Activated T-helper 2 cell treated with anti-CD3 and anti-CD28 coated beads, Interferon-gamma antibody, Interleukin-2, Interleukin-4, amounts not matched to agents 10 μg/mL and 5 μg/mL and 100 μg/mL, durations not matched to agents 14 hours and 24 hours and 36 hours (primary cell): ENCODE measurements at regions of chr5 and their contacts with region 1.

Region 1: DNA sequence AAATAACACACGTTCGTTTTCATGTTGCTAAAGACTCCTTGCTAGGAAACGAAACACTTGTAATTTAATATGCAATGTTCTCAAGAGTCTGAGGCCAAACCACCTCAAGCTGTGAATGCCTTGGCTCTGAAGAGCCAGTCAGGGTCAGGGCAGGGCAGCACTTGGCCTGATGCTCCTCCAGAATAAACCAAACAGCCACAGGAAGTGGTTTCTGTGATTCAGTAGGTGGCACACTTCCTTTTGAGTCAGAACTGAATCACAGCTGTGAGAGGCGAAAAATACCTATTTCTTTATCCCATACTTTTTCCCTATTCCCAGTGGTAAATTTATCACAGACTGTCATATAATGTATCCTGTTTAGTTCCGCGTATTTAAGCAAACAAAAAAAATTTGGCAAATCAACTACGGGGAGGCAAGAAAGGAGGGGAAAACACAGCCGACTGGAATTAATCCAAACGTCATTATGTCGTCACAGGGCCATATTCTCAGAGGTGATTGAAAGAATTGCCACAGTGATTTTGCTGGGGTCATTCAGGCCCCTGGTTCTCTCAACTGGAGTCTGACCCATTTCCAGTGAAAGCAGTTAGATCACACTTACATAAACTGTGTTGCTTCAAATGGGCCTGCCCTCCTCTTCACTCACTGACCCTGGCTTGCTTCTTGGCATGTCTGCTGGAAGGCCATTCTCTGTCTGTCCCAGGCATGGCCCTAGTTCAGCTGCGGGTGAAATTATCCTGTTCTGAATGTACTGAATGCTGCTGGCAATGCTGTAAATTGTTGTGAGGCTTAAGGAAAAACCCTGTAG is 71.2 kb downstream of the ARRDC3 start:
- DNase-seq: peak; percentile 59
- H3K4me3 Mint-ChIP-seq: no peak overlapping the region
- H3K27ac Mint-ChIP-seq: peak overlapping the region; percentile 69
- H3K4me1 Mint-ChIP-seq: peaks cover 44% of the 10 kb centered on the region
- H3K27me3 Mint-ChIP-seq: no peaks in the 10 kb centered on the region

Region 2: DNA sequence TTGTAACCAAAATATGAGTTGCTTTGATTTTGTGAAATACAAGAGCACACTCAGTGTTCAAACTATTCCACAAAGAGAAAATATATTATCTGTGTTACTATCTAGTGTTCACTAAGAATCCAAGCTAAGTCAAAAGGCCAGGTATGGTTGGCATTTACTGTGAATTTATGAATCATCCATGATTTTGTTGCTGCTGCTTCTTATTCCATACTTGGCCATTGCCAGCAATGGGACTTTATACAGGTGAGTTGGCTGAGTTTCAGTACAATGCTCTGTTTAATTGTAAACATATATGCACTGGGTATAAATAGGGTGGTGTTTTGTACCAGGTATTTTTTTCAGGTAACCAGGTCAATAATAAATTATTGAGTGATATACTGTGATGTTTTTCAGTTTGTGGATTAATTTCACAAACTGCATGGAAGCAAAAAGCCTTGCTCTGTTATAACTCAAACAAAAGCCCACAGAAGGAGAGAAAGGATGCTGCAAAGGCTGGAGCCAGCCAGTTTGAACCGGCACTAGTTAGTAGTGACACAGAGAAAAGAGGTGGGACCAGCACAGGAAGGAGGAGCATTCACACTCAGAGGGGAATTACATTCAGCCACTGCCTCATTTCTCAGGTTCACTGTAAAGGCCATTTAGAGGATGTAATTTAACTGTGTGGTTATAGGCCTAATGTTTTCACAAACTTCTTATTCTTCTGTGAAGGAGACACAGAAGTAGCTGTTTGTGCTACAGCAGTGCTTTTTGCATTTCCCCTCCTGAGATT is 371.5 kb before region 1 on chr5:
- intact Hi-C with region 1: loop called (anchors 5 kb)
- DNase-seq: peak; percentile 39
- H3K4me3 Mint-ChIP-seq: no peak overlapping the region
- H3K27ac Mint-ChIP-seq: peak overlapping the region; percentile 82
- H3K4me1 Mint-ChIP-seq: peaks cover 36% of the 10 kb centered on the region
- H3K27me3 Mint-ChIP-seq: no peaks in the 10 kb centered on the region

Region 3: DNA sequence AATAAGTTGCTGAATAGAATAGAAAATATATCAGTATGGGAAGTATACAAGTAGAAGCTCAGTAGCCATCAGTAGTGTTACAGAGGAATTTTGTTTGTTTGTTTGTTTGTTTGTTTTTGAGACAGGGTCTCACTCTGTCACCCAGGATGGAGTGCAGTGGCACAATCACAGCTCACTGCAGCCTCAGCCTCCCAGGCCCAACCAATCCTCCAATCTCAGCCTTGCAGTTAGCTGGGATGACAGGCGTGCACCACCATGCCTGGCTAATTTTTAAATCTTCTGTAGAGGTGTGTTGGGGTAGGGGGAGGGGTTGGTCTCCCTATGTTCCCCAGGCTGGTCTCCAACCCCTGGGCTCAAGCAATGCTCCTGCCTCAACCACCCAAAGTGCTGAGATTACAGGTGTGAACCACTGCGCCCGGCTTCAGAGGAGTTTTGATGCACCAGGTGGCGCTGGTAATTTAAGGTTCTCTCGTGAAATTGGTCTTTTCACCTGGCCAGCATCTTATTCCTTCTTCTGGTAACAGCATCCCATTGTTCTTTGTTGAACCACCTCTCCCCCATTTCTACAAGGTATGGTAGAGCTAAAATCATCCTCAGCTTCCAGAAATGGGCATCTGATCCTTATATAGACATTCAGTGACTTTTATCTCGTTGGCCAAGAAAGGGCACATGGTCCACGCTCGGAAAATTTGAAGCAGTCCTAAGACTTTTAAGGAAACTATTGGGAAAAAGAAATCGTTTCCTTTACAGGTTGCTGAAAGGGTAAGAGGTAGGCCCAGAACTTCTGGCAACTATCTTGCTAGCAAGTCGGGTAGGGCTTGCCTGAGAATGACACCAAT is 85.8 kb before region 1 on chr5:
- intact Hi-C with region 1: loop called (anchors 5 kb)
- DNase-seq: peak; percentile 26
- H3K4me3 Mint-ChIP-seq: no peak overlapping the region
- H3K27ac Mint-ChIP-seq: no peak overlapping the region
- H3K4me1 Mint-ChIP-seq: peaks cover 4% of the 10 kb centered on the region
- H3K27me3 Mint-ChIP-seq: peaks cover 18% of the 10 kb centered on the region

Region 4: DNA sequence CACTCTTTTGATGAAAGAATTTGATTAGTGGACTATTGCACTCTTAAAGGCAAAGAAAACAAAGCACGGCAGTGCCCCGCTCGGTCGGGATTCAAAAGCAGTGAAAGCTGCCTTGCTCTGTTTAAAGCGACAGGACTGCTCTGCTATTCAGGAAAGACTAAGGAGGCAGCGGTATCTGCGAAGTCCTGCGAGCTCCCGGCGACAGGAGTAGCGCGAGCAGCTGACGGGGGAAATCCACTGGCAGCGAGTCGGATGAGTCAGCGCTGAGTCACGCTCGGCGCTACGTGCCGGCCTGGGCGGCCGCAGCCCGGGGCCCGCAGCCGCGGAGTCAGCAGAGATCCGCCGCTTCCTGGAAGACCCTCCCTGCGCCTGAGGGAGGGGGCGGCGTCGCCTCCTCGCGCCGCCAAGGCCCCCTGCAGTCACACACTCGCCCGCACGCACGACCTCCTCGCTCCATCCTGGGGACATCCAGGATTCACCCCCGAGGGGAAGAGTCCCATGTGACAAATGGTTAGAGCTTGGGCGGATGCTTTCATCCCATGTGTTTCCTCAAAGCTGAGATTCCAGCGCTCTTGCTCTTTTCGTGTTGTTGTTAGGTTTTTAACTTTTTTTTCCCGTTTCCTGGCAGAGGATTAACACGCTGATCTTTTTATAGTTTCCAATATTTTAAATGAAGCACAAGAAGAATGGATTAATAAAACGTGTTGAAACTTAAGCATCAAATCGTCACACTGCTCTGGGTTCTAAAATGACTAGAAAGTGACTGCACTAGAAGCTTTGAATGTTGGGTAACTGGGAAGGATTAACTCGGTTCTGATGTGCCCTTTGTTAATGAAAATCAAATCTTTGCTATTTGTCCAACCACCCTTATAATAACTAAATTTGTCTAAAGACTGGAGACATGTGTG is 31.3 kb before region 1 on chr5:
- intact Hi-C with region 1: loop called (anchors 1 kb)
- DNase-seq: peak; percentile 79
- H3K4me3 Mint-ChIP-seq: peak overlapping the region; percentile 81
- H3K27ac Mint-ChIP-seq: peak overlapping the region; percentile 96
- H3K4me1 Mint-ChIP-seq: peaks cover 36% of the 10 kb centered on the region
- H3K27me3 Mint-ChIP-seq: peaks cover 10% of the 10 kb centered on the region

Region 5: DNA sequence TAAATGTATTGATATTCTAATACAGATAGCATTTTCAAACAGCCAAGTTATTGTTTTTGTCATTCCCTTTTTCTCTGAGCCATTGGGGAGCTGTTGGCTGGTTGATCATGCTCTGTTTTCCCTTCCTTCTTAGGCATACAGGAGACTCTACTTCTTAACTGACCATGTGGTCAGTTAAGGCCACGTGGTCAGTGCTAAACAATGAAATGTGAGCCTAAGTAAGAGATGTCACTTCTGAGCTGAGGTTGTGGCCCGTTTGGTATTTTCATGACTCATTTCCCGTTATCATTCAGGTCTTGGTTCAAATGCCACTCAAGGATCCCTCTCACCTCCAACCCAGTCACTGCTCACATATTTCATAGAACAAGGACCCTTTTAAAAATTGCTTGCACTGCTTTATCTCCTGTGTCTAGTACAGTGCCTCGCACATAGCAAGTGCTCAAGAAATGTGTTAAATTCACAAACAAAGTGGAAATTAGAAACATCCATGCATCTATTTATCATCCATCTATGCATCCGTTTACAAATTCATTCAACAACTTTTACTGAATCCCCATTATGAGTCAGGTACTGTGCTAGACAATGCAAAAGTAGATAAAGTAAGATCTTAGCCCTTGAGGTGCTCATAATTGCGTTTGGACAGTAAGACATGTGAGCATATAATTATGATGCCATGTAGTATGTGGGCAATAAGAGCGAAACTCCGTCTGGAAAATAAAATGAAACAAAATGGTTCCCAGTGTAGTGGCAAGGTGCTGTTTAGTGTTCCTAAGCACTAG is 20.6 kb after region 1 on chr5:
- intact Hi-C with region 1: loop called (anchors 1 kb)
- DNase-seq: no peak
- H3K4me3 Mint-ChIP-seq: no peak overlapping the region
- H3K27ac Mint-ChIP-seq: peak overlapping the region; percentile 6
- H3K4me1 Mint-ChIP-seq: peaks cover 30% of the 10 kb centered on the region
- H3K27me3 Mint-ChIP-seq: peaks cover 25% of the 10 kb centered on the region